ENCODE measurements at regions of chr3 and their contacts with region 1.

Region 1: GRCh38 chr3:71226565-71227269 is 356.8 kb downstream of the FOXP1 start:
- DNase-seq: peak; percentile 95
- H3K4me3 Mint-ChIP-seq: peak overlapping the region; percentile 77
- H3K27ac Mint-ChIP-seq: peak overlapping the region; percentile 94
- H3K4me1 Mint-ChIP-seq: peaks cover 83% of the 10 kb centered on the region
- H3K27me3 Mint-ChIP-seq: no peaks in the 10 kb centered on the region

Region 2: GRCh38 chr3:70771426-70772147 is 455.1 kb before region 1 on chr3:
- CTCF ChIA-PET with region 1: no interaction called
- intact Hi-C with region 1: loop called (anchors 10 kb)
- DNase-seq: no peak
- H3K4me3 Mint-ChIP-seq: no peak overlapping the region
- H3K27ac Mint-ChIP-seq: no peak overlapping the region
- H3K4me1 Mint-ChIP-seq: peaks cover 14% of the 10 kb centered on the region
- H3K27me3 Mint-ChIP-seq: peaks cover 25% of the 10 kb centered on the region

Region 3: DNA sequence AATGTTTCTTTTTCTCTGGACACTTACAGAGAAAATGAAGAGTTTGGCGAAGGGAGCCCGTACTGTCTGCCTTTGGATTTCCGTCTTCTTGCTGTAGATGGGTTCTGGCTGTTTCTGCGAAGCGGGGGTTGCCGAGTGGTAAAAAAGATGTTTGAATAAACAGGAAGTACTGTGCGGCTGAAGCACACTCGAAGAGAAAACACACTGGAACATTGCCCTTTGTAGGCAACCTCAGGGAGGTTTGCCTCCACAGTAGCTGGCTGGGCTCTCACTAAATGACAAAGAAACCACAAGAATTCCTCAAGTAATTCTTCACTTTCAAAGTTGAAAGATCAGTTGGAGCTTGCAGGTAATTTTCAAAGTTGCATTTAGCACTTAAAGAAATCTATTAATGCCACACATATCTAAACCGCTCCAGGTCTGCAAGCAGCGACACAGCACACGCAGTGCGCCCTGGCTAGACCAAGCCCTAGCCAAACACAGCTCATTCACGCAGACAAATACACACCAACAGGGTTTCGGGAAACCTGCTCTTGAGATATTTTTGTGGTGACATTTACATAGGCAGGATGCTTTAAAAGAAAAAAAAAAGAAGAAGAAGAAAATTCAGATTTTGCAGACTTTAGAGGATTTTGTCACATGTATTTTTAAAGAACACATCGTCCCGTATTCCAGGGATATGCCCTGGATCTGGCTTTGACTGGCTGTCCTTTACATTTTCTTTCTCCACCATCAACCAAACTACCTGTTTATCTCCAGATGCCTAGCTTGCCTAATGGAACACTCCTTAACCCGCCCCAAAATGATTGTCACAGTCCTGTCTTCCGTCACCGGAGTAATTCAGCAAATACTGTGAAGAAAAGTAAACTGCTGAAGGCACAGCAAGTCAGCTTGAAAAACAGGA is 96.0 kb before region 1 on chr3:
- CTCF ChIA-PET with region 1: no interaction called
- intact Hi-C with region 1: loop called (anchors 1 kb)
- DNase-seq: peak; percentile 82
- H3K4me3 Mint-ChIP-seq: peak overlapping the region; percentile 88
- H3K27ac Mint-ChIP-seq: peak overlapping the region; percentile 96
- H3K4me1 Mint-ChIP-seq: peaks cover 66% of the 10 kb centered on the region
- H3K27me3 Mint-ChIP-seq: no peaks in the 10 kb centered on the region

Region 4: DNA sequence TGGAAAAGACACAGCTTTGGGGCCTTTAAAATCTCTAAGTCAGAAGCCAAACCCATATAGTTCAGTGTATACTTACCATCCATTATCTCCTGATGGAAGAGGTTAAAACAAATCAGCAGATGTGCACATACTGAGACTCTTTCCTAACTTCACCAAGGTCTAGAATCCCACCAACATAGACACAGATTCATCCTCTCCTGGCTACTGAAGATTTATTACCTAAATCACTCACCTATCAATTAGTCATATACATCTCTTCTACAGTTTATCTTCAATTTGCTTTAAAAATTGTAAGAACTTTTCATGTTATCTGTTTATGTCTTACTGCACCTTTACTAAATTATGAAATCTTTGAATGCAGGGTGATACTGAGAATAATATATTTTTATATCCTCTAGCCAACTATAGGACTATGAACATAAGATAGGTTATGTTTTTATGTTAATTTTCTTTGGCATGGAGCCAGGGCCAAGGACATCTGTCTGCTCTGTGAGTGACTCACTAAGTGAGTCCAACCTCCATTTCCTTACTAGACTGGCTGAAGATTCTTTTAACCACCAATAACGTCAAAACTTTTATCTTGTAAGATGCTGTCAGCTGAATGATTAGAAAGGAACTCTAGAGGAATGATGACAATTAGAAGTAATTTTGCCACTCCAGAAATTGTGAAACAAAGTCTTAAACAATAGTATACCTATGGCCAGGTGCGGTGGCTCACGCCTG is 40.8 kb before region 1 on chr3:
- CTCF ChIA-PET with region 1: interaction called, 4 read pairs
- intact Hi-C with region 1: loop called (anchors 1 kb)
- DNase-seq: peak; percentile 50
- H3K4me3 Mint-ChIP-seq: no peak overlapping the region
- H3K27ac Mint-ChIP-seq: peak overlapping the region; percentile 37
- H3K4me1 Mint-ChIP-seq: peaks cover 67% of the 10 kb centered on the region
- H3K27me3 Mint-ChIP-seq: no peaks in the 10 kb centered on the region

Region 5: GRCh38 chr3:71397046-71397445 is 170.3 kb after region 1 on chr3:
- CTCF ChIA-PET with region 1: no interaction called
- intact Hi-C with region 1: loop called (anchors 2 kb)
- DNase-seq: peak; percentile 35
- H3K4me3 Mint-ChIP-seq: peak overlapping the region; percentile 5
- H3K27ac Mint-ChIP-seq: no peak overlapping the region
- H3K4me1 Mint-ChIP-seq: peaks cover 81% of the 10 kb centered on the region
- H3K27me3 Mint-ChIP-seq: no peaks in the 10 kb centered on the region

Region 6: GRCh38 chr3:71652781-71653413 is 426.2 kb after region 1 on chr3:
- CTCF ChIA-PET with region 1: no interaction called
- intact Hi-C with region 1: loop called (anchors 5 kb)
- DNase-seq: peak; percentile 42
- H3K4me3 Mint-ChIP-seq: no peak overlapping the region
- H3K27ac Mint-ChIP-seq: no peak overlapping the region
- H3K4me1 Mint-ChIP-seq: peaks cover 4% of the 10 kb centered on the region
- H3K27me3 Mint-ChIP-seq: no peaks in the 10 kb centered on the region

Measured in activated naive CD4-positive, alpha-beta T cell treated with anti-CD3 and anti-CD28 coated beads for 36 hours (primary cell).